ENCODE measurements at regions of chr1 and their contacts with region 1.

Region 1: DNA sequence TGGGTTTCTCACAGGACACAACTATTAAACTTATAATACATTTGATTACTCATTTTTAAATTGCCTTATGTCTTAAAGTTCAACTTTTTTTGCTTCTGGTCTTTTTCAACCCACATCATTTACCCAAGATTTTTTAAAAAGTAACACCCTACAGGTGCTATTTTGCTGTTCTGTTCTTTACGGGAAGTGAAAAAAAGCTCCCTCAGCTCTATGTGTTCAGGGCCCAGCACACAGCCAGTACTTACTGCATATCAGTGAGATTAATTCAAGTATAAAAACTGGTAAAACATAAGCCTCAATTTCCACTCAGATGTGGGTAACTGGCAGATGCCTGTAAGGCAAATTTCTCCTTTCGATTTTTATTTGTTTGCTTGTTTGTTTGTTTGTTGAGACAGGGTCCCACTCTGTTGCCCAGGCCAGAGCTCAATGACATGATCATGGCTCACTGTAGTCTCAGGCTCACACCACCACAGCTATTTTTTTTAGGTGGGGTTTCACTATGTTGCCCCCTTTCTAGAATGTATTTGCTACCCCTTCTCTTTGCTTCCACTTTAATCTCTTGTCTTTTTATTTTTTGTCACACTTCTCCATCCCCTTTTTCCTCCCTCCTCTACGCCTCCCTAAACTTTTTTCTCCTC is 20.3 kb downstream of the RNASEL start:
- DNase-seq: peak; percentile 52
- ATAC-seq: peak; percentile 78
- H3K4me3 ChIP-seq: no peak overlapping the region
- H3K4me3 Mint-ChIP-seq: no peak overlapping the region
- H3K27ac ChIP-seq: peak overlapping the region; percentile 65 to 72
- H3K27ac Mint-ChIP-seq: no peak overlapping the region
- H3K4me1 ChIP-seq: peaks cover 26 to 39% of the 10 kb centered on the region in 2 donors
- H3K4me1 Mint-ChIP-seq: peaks cover 18% of the 10 kb centered on the region
- H3K27me3 ChIP-seq: no peaks in the 10 kb centered on the region
- H3K27me3 Mint-ChIP-seq: no peaks in the 10 kb centered on the region
- CTCF ChIP-seq: no peak

Region 2: DNA sequence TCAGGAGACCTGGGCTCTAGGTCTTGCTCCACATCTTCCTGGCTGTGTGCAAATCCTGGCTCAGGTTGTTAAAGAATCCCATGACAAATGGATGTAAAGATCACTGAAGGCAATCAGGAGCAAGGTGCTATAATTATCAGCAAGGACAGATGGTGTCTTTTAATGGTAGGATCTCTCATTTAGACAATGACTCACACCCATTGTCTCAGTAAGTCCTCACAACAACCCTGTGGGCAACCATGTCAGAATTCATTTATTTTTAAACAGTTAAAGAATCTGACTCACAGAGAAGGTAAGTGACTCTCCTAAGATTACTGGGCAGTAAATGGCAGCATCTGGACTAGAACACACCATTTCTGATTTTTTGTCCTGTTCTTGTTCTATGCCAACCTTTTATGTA is 12.5 kb before region 1 on chr1:
- CTCF ChIA-PET with region 1: no interaction called
- POLR2A ChIA-PET with region 1: no interaction called
- intact Hi-C with region 1: no loop called
- DNase-seq: no peak
- ATAC-seq: no peak
- H3K4me3 ChIP-seq: no peak overlapping the region
- H3K4me3 Mint-ChIP-seq: no peak overlapping the region
- H3K27ac ChIP-seq: no peak overlapping the region
- H3K27ac Mint-ChIP-seq: no peak overlapping the region
- H3K4me1 ChIP-seq: no peaks in the 10 kb centered on the region
- H3K4me1 Mint-ChIP-seq: peaks cover 2% of the 10 kb centered on the region
- H3K27me3 ChIP-seq: peaks cover 0 to 3% (median 0%) of the 10 kb centered on the region in 4 experiments
- H3K27me3 Mint-ChIP-seq: no peaks in the 10 kb centered on the region
- CTCF ChIP-seq: no peak

Region 3: DNA sequence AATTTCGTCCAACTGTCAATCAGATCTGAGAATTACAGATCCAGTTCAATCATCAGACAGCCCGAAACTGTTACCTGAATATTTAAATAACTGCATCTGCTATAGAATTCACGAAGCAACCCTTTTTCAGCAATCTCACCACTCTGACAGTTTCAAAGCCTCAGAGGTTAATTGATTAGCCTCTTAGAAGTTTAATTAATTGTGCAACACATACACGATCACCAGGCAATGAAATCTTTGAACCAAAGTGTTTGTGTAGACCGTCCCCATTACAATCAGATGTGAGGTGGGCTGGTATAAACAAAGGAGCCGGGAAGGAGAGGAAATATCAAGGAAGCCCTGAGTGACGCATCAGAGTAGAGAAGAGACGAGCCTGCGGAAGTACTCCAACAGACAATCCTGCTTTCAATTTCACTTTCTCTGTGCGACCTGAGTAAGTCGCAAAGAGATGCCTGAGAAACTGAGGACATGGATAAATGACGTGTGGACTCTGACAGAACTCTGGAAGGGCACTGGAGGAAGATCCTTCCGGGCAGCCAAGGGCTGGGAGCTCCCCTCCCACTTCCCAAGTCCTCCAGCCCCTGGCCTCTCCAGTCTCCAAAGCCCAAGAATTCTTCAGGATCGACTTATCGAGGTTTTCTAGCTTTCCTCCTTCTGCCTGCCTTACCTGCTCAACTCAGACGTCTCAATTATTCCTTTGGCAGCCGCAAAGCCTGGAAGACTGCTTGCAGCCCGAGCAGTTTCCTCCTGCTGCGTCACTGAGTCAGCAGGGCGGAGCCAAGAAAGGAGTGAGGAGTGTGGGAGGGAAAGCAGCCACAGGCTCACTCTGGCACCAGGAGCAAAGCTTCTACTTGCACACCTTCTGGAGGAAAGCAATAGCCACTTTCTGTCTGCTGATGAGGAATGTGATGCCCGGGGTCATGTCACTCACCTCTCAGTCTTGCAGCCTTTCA is 20.0 kb after region 1 on chr1 and contains the start of gene RNASEL:
- CTCF ChIA-PET with region 1: interaction called, 22 read pairs
- POLR2A ChIA-PET with region 1: interaction called, 4 read pairs
- intact Hi-C with region 1: loop called (anchors 2 kb)
- DNase-seq: peak; percentile 80
- ATAC-seq: peak; percentile 87
- H3K4me3 ChIP-seq: peak within 1 kb of the TSS; percentile 68 to 100 (median 82)
- H3K4me3 Mint-ChIP-seq: peak within 1 kb of the TSS; percentile 99
- H3K27ac ChIP-seq: peak within 1 kb of the TSS; percentile 94 to 98
- H3K27ac Mint-ChIP-seq: peak within 1 kb of the TSS; percentile 99
- H3K4me1 ChIP-seq: peaks cover 28 to 32% of the 10 kb centered on the region in 2 donors
- H3K4me1 Mint-ChIP-seq: peaks cover 42% of the 10 kb centered on the region
- H3K27me3 ChIP-seq: no peaks in the 10 kb centered on the region
- H3K27me3 Mint-ChIP-seq: no peaks in the 10 kb centered on the region
- CTCF ChIP-seq: no peak
- total RNA-seq, gene RNASEL: 18.1 and 21.0 TPM in 2 replicates

Region 4: GRCh38 chr1:182595641-182596240 is 27.0 kb after region 1 on chr1:
- CTCF ChIA-PET with region 1: interaction called, 22 read pairs
- POLR2A ChIA-PET with region 1: no interaction called
- intact Hi-C with region 1: no loop called
- DNase-seq: peak; percentile 67
- ATAC-seq: peak; percentile 86
- H3K4me3 ChIP-seq: no peak overlapping the region
- H3K4me3 Mint-ChIP-seq: no peak overlapping the region
- H3K27ac ChIP-seq: no peak overlapping the region
- H3K27ac Mint-ChIP-seq: no peak overlapping the region
- H3K4me1 ChIP-seq: peaks cover 0 to 3% of the 10 kb centered on the region in 2 donors
- H3K4me1 Mint-ChIP-seq: peaks cover 4% of the 10 kb centered on the region
- H3K27me3 ChIP-seq: no peaks in the 10 kb centered on the region
- H3K27me3 Mint-ChIP-seq: no peaks in the 10 kb centered on the region
- CTCF ChIP-seq: peak; percentile 92

Measured in B cell (primary cell).